Psoas muscle (tissue), 8 donors: ENCODE measurements at regions of chr12 and their contacts with region 1.

Region 1: GRCh38 chr12:103799870-103800771 is 40.9 kb downstream of the NT5DC3 start:
- DNase-seq: peak; percentile 61 to 79
- ATAC-seq: peak; percentile 84 to 92 (median 86)
- H3K4me3 ChIP-seq: peak overlapping the region; percentile 33
- H3K27ac ChIP-seq: peak overlapping the region; percentile 88
- H3K4me1 ChIP-seq: peaks cover 49% of the 10 kb centered on the region
- H3K27me3 ChIP-seq: no peaks in the 10 kb centered on the region
- CTCF ChIP-seq: no peak

Region 2: DNA sequence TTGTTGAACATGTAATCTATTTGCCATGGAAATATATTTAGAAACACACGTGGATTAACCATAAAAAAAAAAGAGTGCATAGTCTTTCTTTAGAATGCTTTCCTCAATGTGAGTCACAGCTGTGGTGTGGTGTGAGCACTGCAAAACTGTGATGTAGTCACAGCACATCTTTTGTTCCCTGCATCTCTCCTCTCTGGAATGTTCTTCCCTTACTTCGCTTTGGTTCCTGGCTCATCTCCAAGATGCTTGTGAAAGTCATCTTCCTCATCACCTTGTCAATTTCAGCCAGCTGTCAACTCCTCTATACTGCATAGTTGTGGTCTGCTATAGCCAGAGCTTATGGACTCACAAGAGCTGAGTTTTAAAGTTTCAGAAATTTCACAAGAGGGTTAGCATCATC is 152.9 kb before region 1 on chr12:
- intact Hi-C with region 1: no loop called
- DNase-seq: no peak
- ATAC-seq: peak in 3 of 4 donors; percentile 36 to 83 (median 57)
- H3K4me3 ChIP-seq: no peak overlapping the region
- H3K27ac ChIP-seq: no peak overlapping the region
- H3K4me1 ChIP-seq: no peaks in the 10 kb centered on the region
- H3K27me3 ChIP-seq: peaks cover 0 to 2% (median 1%) of the 10 kb centered on the region in 3 donors
- CTCF ChIP-seq: no peak

Region 3: DNA sequence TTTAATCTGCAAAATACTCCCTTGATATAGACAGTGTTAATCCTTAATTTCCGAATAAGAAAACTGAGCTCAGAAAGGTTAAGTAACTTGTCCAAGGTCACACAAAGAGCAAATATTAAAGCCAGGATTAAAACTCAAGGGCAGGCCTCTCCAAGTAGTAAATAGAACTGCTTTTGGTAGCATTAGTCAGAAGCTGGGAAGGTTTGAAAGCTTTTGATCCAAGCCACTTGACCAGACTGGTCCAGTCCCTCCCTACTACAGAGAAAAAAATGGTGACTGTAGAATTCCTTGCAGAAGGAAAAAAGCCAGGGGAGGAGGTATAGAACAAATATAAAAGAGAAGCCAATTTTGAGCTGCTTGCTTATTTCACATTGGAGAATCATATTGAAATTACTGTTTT is 70.6 kb before region 1 on chr12:
- intact Hi-C with region 1: no loop called
- DNase-seq: no peak
- ATAC-seq: no peak
- H3K4me3 ChIP-seq: no peak overlapping the region
- H3K27ac ChIP-seq: no peak overlapping the region
- H3K4me1 ChIP-seq: no peaks in the 10 kb centered on the region
- H3K27me3 ChIP-seq: no peaks in the 10 kb centered on the region
- CTCF ChIP-seq: no peak

Region 4: GRCh38 chr12:103840876-103841689 is 41.0 kb after region 1 on chr12 and contains the start of gene NT5DC3:
- intact Hi-C with region 1: loop called (anchors 2 to 5 kb)
- DNase-seq: peak; percentile 80 to 92
- ATAC-seq: peak; percentile 94 to 97 (median 94)
- H3K4me3 ChIP-seq: peak within 1 kb of the TSS; percentile 91
- H3K27ac ChIP-seq: peak within 1 kb of the TSS; percentile 94
- H3K4me1 ChIP-seq: no peaks in the 10 kb centered on the region
- H3K27me3 ChIP-seq: no peaks in the 10 kb centered on the region
- CTCF ChIP-seq: no peak
- total RNA-seq, gene NT5DC3: 15.2 to 64.2 (median 19.5) TPM